H1 (cell line): ENCODE measurements at regions of chr1 and their contacts with region 1.

Region 1: GRCh38 chr1:224329842-224330753 is at the start of gene NVL:
- DNase-seq: peak; percentile 60 to 88
- H3K4me3 ChIP-seq: peak within 1 kb of the TSS; percentile 89 to 100 (median 98)
- H3K27ac ChIP-seq: peak within 1 kb of the TSS; percentile 95
- H3K4me1 ChIP-seq: no peaks in the 10 kb centered on the region; a peak in 3 of 7 replicates
- H3K27me3 ChIP-seq: no peaks in the 10 kb centered on the region
- CTCF ChIP-seq: no peak
- EP300 ChIP-seq: peak in 1 of 2 experiments; percentile 39; a peak in 1 of 3 replicates
- POLR2A ChIP-seq: peak in 1 of 2 experiments; percentile 50; a peak in 2 of 3 replicates
- RAD21 ChIP-seq: no peak; a peak in 1 of 4 replicates
- total RNA-seq, gene NVL: 42.4 and 45.8 TPM in 2 replicates

Region 2: DNA sequence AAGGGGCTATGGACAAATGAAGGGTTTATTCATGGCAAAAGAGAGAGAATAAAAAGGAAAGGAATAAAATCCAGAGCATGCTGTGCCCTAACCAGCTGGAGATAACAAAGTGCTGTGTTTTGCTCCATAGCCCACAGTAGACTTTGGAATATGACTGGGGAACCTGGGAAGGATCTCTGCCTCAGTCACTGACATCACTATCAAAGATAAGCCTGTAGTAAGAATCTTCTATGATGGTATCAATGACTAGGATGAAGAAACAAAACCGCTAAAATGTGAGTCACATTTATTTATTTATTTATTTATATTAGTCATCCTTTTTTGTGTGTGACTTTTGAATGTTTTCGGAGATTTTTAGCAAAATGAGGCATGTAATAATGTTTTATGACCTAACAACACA is 56.5 kb before region 1 on chr1:
- CTCF ChIA-PET with region 1: no interaction called
- POLR2A ChIA-PET with region 1: no interaction called
- DNase-seq: no peak
- H3K4me3 ChIP-seq: no peak overlapping the region
- H3K27ac ChIP-seq: no peak overlapping the region
- H3K4me1 ChIP-seq: no peaks in the 10 kb centered on the region
- H3K27me3 ChIP-seq: no peaks in the 10 kb centered on the region
- CTCF ChIP-seq: no peak
- EP300 ChIP-seq: no peak
- POLR2A ChIP-seq: no peak
- RAD21 ChIP-seq: no peak

Region 3: GRCh38 chr1:224317383-224318024 is 12.6 kb before region 1 on chr1:
- CTCF ChIA-PET with region 1: interaction called, 3 read pairs
- POLR2A ChIA-PET with region 1: interaction called, 10 read pairs
- DNase-seq: no peak
- H3K4me3 ChIP-seq: no peak overlapping the region
- H3K27ac ChIP-seq: no peak overlapping the region
- H3K4me1 ChIP-seq: no peaks in the 10 kb centered on the region
- H3K27me3 ChIP-seq: no peaks in the 10 kb centered on the region
- CTCF ChIP-seq: no peak
- EP300 ChIP-seq: no peak
- POLR2A ChIP-seq: no peak
- RAD21 ChIP-seq: no peak

Region 4: GRCh38 chr1:224377676-224378006 is 47.5 kb after region 1 on chr1:
- CTCF ChIA-PET with region 1: no interaction called
- POLR2A ChIA-PET with region 1: no interaction called
- DNase-seq: no peak
- H3K4me3 ChIP-seq: no peak overlapping the region
- H3K27ac ChIP-seq: no peak overlapping the region
- H3K4me1 ChIP-seq: no peaks in the 10 kb centered on the region
- H3K27me3 ChIP-seq: no peaks in the 10 kb centered on the region
- CTCF ChIP-seq: no peak
- EP300 ChIP-seq: no peak
- POLR2A ChIP-seq: no peak
- RAD21 ChIP-seq: no peak